Heart right ventricle (tissue), 16 donors: ENCODE measurements at regions of chr9 and their contacts with region 1.

Region 1: GRCh38 chr9:122810306-122810946 is 10.5 kb downstream of the OR1K1 start:
- DNase-seq: peak; percentile 66 to 70
- ATAC-seq: peak; percentile 77 to 91 (median 87)
- H3K4me3 ChIP-seq: no peak overlapping the region
- H3K27ac ChIP-seq: no peak overlapping the region
- H3K4me1 ChIP-seq: peaks cover 0 to 7% (median 0%) of the 10 kb centered on the region in 9 donors
- H3K27me3 ChIP-seq: no peaks in the 10 kb centered on the region
- CTCF ChIP-seq: peak; percentile 65 to 86 (median 78)

Region 2: GRCh38 chr9:122092611-122093506 is 717.6 kb before region 1 on chr9 and contains the start of gene TTLL11:
- intact Hi-C with region 1: loop called in 6 of 10 experiments (anchors 5 to 10 kb)
- DNase-seq: peak; percentile 97
- ATAC-seq: peak; percentile 93 to 99 (median 98)
- H3K4me3 ChIP-seq: peak within 1 kb of the TSS; percentile 78 to 97 (median 94)
- H3K27ac ChIP-seq: peak within 1 kb of the TSS in 9 of 10 donors; percentile 61 to 86 (median 83)
- H3K4me1 ChIP-seq: peaks cover 14 to 50% (median 27%) of the 10 kb centered on the region in 9 donors
- H3K27me3 ChIP-seq: peaks cover 0 to 2% (median 0%) of the 10 kb centered on the region in 7 donors
- CTCF ChIP-seq: peak in 1 of 9 donors; percentile 3
- total RNA-seq, gene TTLL11: 5.2 to 8.7 (median 5.9) TPM

Region 3: GRCh38 chr9:122107291-122107805 is 703.1 kb before region 1 on chr9:
- intact Hi-C with region 1: loop called in 1 of 10 experiments (anchors 5 kb)
- DNase-seq: no peak
- ATAC-seq: peak; percentile 40 to 92 (median 78)
- H3K4me3 ChIP-seq: no peak overlapping the region
- H3K27ac ChIP-seq: peak overlapping the region in 3 of 10 donors; percentile 7 to 35 (median 11)
- H3K4me1 ChIP-seq: peaks cover 0 to 20% (median 0%) of the 10 kb centered on the region in 9 donors
- H3K27me3 ChIP-seq: no peaks in the 10 kb centered on the region
- CTCF ChIP-seq: no peak

Region 4: GRCh38 chr9:122274055-122274454 is 536.4 kb before region 1 on chr9:
- intact Hi-C with region 1: no loop called
- DNase-seq: no peak
- ATAC-seq: no peak
- H3K4me3 ChIP-seq: no peak overlapping the region
- H3K27ac ChIP-seq: no peak overlapping the region
- H3K4me1 ChIP-seq: peaks cover 0 to 7% (median 0%) of the 10 kb centered on the region in 9 donors
- H3K27me3 ChIP-seq: no peaks in the 10 kb centered on the region
- CTCF ChIP-seq: no peak

Region 5: GRCh38 chr9:122350638-122351355 is 459.6 kb before region 1 on chr9:
- intact Hi-C with region 1: loop called in 1 of 10 experiments (anchors 10 kb)
- DNase-seq: peak; percentile 80 to 84
- ATAC-seq: peak; percentile 69 to 87 (median 84)
- H3K4me3 ChIP-seq: no peak overlapping the region
- H3K27ac ChIP-seq: no peak overlapping the region
- H3K4me1 ChIP-seq: peaks cover 7 to 32% (median 21%) of the 10 kb centered on the region in 9 donors
- H3K27me3 ChIP-seq: peaks cover 0 to 14% (median 0%) of the 10 kb centered on the region in 7 donors
- CTCF ChIP-seq: peak; percentile 96 to 99 (median 97)

Region 6: DNA sequence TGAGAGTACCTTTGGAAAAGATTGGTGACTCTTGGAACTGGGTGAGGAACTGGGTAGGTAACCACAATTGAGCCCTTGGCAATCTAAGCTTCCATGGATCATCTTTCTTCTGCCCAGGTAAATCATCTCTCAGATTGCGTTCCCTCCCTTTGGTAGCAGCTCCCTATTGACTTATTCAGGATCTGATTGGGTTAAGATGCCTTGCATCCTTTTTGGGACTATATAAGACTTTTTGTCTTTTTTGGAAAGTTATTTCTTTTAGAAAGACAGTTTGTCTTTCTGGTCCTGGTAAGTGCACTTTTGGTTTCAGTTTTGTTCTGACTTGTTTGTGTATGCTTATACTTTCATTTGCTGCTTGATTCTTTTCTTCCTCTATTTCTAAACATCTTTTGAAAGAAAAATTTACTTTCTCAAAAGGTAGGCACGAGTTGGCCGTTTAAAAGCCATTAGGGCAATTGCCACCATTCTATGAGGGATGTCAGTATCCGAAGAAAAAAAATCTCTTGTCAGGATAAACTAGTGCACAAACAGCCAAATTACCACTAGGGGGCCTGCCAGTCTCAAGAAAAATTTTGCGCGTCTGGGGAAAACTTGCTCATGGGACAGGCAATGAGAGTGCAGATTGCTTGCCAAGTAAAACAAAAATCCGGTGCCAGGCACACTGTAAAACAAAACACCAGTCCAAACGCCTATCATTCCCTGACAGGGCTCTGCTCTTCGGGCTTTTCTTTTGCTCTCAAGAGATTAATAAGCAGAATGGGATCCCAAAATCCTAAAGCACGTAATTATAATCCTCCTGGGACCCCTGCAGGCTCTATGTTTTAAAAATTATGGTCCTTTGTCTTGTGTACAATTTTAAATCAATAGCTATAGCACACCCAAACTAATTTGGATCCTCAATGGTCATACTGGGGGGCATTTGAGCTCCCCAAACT is 345.5 kb before region 1 on chr9:
- intact Hi-C with region 1: loop called (anchors 1 to 5 kb)
- DNase-seq: peak; percentile 29 to 83
- ATAC-seq: peak; percentile 51 to 93 (median 80)
- H3K4me3 ChIP-seq: peak overlapping the region in 9 of 10 donors; percentile 20 to 51 (median 41)
- H3K27ac ChIP-seq: peak overlapping the region in 2 of 10 donors; percentile 5 to 73
- H3K4me1 ChIP-seq: peaks cover 0 to 12% (median 8%) of the 10 kb centered on the region in 9 donors
- H3K27me3 ChIP-seq: peaks cover 0 to 31% (median 6%) of the 10 kb centered on the region in 7 donors
- CTCF ChIP-seq: peak; percentile 73 to 87 (median 80)

Region 7: DNA sequence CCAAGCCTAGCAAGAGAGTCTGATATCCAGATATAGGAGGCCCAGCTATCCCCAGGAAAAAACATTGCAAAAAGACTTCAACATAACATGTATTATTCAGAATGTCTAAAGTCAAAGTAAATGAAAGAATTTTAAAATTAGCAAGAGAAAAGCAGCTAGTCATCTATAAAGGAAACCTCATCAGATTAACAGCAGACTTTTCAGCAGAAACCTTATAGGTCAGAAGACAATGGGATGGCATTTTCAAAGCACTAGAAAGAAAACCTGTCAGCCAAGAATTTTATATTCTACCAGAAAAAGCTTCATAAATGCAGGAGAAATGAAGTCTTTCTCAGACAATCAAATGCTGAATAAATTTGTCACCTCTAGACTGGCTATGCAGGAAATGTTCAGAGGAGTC is 125.6 kb before region 1 on chr9:
- intact Hi-C with region 1: no loop called
- DNase-seq: no peak
- ATAC-seq: no peak
- H3K4me3 ChIP-seq: no peak overlapping the region
- H3K27ac ChIP-seq: no peak overlapping the region
- H3K4me1 ChIP-seq: no peaks in the 10 kb centered on the region
- H3K27me3 ChIP-seq: no peaks in the 10 kb centered on the region
- CTCF ChIP-seq: no peak

Region 8: DNA sequence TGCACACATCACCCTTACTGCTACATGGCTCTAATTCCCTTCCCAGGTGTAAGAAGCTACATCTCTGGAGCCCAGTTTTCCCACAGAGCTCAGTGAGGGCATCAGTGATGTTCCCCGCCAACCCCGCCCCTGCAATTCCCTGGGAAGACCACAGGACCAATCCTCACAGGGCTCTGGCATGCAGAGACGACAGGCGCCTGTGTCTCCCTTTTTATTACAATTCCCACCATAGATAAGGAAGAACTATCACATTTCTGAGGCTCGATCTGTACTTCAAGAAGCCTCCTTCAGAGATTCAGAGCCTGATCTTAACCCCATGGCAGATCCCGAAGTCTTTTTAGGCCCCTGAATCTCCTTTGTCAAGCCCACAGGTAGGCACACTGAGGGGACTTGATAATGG is 68.4 kb before region 1 on chr9 and contains the start of gene OR1L6:
- intact Hi-C with region 1: no loop called
- DNase-seq: no peak
- ATAC-seq: no peak
- H3K4me3 ChIP-seq: no peak within 1 kb of the TSS
- H3K27ac ChIP-seq: no peak within 1 kb of the TSS
- H3K4me1 ChIP-seq: no peaks in the 10 kb centered on the region
- H3K27me3 ChIP-seq: no peaks in the 10 kb centered on the region
- CTCF ChIP-seq: no peak
- total RNA-seq, gene OR1L6: not detected

Region 9: GRCh38 chr9:123091459-123091858 is 281.0 kb after region 1 on chr9:
- intact Hi-C with region 1: no loop called
- DNase-seq: no peak
- ATAC-seq: no peak
- H3K4me3 ChIP-seq: no peak overlapping the region
- H3K27ac ChIP-seq: no peak overlapping the region
- H3K4me1 ChIP-seq: peaks cover 0 to 8% (median 0%) of the 10 kb centered on the region in 9 donors
- H3K27me3 ChIP-seq: no peaks in the 10 kb centered on the region
- CTCF ChIP-seq: no peak